ENCODE measurements at regions of chr9 and their contacts with region 1.

Region 1: GRCh38 chr9:38068866-38069629 is at the start of gene SHB:
- DNase-seq: peak; percentile 70 to 76
- ATAC-seq: peak; percentile 71 to 72
- H3K4me3 ChIP-seq: peak within 1 kb of the TSS; percentile 85 to 99 (median 92)
- H3K27ac ChIP-seq: peak within 1 kb of the TSS; percentile 89 to 97 (median 94)
- H3K4me1 ChIP-seq: peaks cover 11 to 21% of the 10 kb centered on the region in 2 donors
- H3K27me3 ChIP-seq: no peaks in the 10 kb centered on the region
- CTCF ChIP-seq: peak in 4 of 5 experiments; percentile 29 to 47 (median 37)
- POLR2A ChIP-seq: peak; percentile 88 to 91
- total RNA-seq, gene SHB: 1.2 to 6.1 (median 4.6) TPM

Region 2: GRCh38 chr9:37994639-37995347 is 74.3 kb before region 1 on chr9:
- in situ Hi-C with region 1: no loop called
- intact Hi-C with region 1: loop called (anchors 2 kb)
- DNase-seq: peak; percentile 83 to 90
- ATAC-seq: peak; percentile 92 to 97
- H3K4me3 ChIP-seq: peak overlapping the region in 3 of 4 donors; percentile 7 to 31 (median 29)
- H3K27ac ChIP-seq: peak overlapping the region; percentile 76 to 88 (median 82)
- H3K4me1 ChIP-seq: peaks cover 19 to 27% of the 10 kb centered on the region in 2 donors
- H3K27me3 ChIP-seq: no peaks in the 10 kb centered on the region
- CTCF ChIP-seq: no peak
- POLR2A ChIP-seq: peak in 1 of 2 donors; percentile 27

Region 3: GRCh38 chr9:38017149-38017884 is 51.7 kb before region 1 on chr9:
- in situ Hi-C with region 1: no loop called
- intact Hi-C with region 1: loop called (anchors 2 kb)
- DNase-seq: peak; percentile 53 to 74
- ATAC-seq: peak; percentile 91 to 92
- H3K4me3 ChIP-seq: peak overlapping the region; percentile 16 to 30 (median 21)
- H3K27ac ChIP-seq: peak overlapping the region in 2 of 4 donors; percentile 20 to 26
- H3K4me1 ChIP-seq: peaks cover 29 to 39% of the 10 kb centered on the region in 2 donors
- H3K27me3 ChIP-seq: no peaks in the 10 kb centered on the region
- CTCF ChIP-seq: peak; percentile 39 to 67 (median 58)
- POLR2A ChIP-seq: no peak

Region 4: DNA sequence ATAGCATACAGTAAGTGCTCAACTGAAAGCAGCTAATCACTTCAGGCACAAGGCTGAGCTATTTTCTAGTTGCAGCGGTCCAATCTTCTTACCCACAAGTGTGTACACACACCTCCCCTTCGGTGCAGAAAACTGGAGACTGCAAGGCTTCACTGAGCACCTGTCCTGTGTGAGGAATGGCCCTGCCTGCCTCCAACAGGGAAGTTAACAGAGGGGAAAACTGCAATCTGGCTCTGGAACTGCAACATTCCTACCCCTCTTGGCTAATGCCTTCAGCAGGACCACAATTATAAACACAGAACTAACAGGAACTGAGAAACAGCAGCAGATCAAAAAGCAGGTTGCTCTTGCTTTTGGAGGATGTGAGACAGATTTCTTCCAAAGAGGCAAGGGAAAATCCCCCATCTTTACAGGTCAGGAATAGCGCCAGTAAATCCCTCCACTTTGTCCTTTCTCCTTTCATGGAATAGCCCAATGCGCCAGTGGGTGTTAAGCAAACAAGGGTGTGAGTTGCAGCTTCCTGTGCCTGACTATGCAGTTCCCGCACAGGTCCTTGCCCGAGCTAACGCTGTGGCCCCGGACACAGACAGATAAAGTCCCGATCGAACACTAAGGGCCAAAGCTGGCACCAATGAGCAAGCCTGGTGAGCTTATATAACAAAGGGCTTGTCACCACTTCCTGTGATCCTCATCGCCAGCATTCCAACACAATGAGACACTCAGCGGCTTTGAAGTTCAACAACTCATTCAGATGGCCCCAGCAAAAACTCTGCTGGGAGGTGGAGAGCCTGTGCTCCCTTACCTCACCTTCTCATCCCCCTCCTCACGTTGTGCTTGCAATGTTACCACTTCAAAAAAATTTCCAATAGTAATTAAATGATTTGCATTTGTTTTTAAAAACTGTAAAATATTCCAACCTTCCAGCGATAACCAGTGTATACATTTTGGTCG is 21.5 kb before region 1 on chr9:
- in situ Hi-C with region 1: no loop called
- intact Hi-C with region 1: loop called (anchors 2 kb)
- DNase-seq: peak in 1 of 2 donors; percentile 31
- ATAC-seq: peak; percentile 75 to 89
- H3K4me3 ChIP-seq: peak overlapping the region in 2 of 4 donors; percentile 12 to 29
- H3K27ac ChIP-seq: peak overlapping the region; percentile 19 to 60 (median 42)
- H3K4me1 ChIP-seq: peaks cover 32 to 33% of the 10 kb centered on the region in 2 donors
- H3K27me3 ChIP-seq: no peaks in the 10 kb centered on the region
- CTCF ChIP-seq: no peak
- POLR2A ChIP-seq: no peak

Region 5: DNA sequence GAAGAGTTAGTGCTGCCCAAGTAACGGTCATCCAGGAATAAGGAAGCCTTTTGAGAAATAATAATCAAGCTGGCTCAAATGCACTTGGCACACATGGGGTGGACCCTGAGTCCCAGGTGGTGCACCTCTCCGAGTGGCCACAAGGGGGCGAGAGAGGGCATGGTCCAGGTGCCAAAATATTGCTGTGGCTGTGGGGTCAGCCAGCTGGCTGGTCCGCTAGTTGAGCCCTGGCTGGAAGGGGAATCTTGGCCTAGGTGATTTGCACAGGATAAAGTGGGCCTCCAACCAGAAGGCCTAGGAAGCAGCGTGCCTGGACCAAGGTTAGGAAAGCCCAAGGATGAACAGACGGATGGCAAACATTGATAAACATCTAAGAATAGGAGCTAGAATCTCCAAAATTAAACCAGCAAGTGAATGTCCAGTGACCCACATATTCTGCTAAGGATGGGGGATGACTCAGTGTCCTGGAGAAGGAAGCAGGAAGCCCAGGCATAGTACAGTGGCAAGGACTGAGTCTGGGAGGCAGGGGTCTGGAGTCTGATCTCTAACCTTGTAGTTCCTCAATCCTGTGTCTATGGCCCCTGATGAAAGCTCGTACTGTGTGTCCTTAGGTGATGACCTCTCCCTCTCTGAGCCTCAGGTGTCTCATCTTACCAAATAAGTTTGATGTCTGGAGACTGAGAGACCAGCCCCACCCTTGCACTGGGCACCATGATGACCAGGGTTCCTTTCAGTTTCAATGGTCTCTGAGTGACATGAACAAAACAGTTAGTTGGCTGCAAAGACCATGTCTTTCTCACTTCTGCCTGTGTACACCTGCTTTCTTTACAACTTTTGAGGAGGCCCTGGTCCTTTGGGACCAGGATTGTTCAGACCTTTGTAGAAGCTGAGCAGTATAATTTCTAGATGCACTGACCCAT is 19.2 kb after region 1 on chr9:
- in situ Hi-C with region 1: no loop called
- intact Hi-C with region 1: loop called (anchors 2 kb)
- DNase-seq: peak; percentile 23 to 64
- ATAC-seq: peak; percentile 85 to 89
- H3K4me3 ChIP-seq: no peak overlapping the region
- H3K27ac ChIP-seq: peak overlapping the region in 2 of 4 donors; percentile 36 to 42
- H3K4me1 ChIP-seq: peaks cover 8 to 9% of the 10 kb centered on the region in 2 donors
- H3K27me3 ChIP-seq: no peaks in the 10 kb centered on the region
- CTCF ChIP-seq: peak; percentile 87 to 95 (median 90)
- POLR2A ChIP-seq: no peak

Region 6: GRCh38 chr9:38160613-38161215 is 91.7 kb after region 1 on chr9:
- in situ Hi-C with region 1: loop called in 1 of 4 experiments (anchors 25 kb)
- intact Hi-C with region 1: no loop called
- DNase-seq: peak; percentile 19 to 35
- ATAC-seq: peak; percentile 66 to 80
- H3K4me3 ChIP-seq: no peak overlapping the region
- H3K27ac ChIP-seq: no peak overlapping the region
- H3K4me1 ChIP-seq: peaks cover 0 to 3% of the 10 kb centered on the region in 2 donors
- H3K27me3 ChIP-seq: no peaks in the 10 kb centered on the region
- CTCF ChIP-seq: peak; percentile 48 to 86 (median 71)
- POLR2A ChIP-seq: no peak

Region 7: GRCh38 chr9:38761334-38761733 is 692.3 kb after region 1 on chr9:
- in situ Hi-C with region 1: no loop called
- intact Hi-C with region 1: no loop called
- DNase-seq: no peak
- ATAC-seq: no peak
- H3K4me3 ChIP-seq: no peak overlapping the region
- H3K27ac ChIP-seq: no peak overlapping the region
- H3K4me1 ChIP-seq: no peaks in the 10 kb centered on the region
- H3K27me3 ChIP-seq: peaks cover 0 to 2% (median 0%) of the 10 kb centered on the region in 3 donors
- CTCF ChIP-seq: no peak
- POLR2A ChIP-seq: no peak

Measured in gastrocnemius medialis (tissue), 4 donors.